CD4-positive, alpha-beta memory T cell (primary cell): ENCODE measurements at regions of chr15 and their contacts with region 1.

Region 1: GRCh38 chr15:70299931-70300869 is 202.5 kb upstream of the TLE3 start:
- DNase-seq: peak; percentile 60 to 88 (median 64)
- H3K4me3 ChIP-seq: no peak overlapping the region
- H3K4me3 Mint-ChIP-seq: peak overlapping the region in 7 of 8 donors; percentile 32 to 70 (median 64)
- H3K27ac ChIP-seq: no peak overlapping the region
- H3K27ac Mint-ChIP-seq: peak overlapping the region; percentile 61 to 90 (median 83)
- H3K4me1 ChIP-seq: peaks cover 32% of the 10 kb centered on the region
- H3K4me1 Mint-ChIP-seq: peaks cover 9 to 19% (median 16%) of the 10 kb centered on the region in 4 donors
- H3K27me3 ChIP-seq: no peaks in the 10 kb centered on the region
- H3K27me3 Mint-ChIP-seq: no peaks in the 10 kb centered on the region

Region 2: GRCh38 chr15:69997697-69998273 is 302.4 kb before region 1 on chr15:
- CTCF ChIA-PET with region 1: no interaction called
- POLR2A ChIA-PET with region 1: no interaction called
- intact Hi-C with region 1: no loop called
- DNase-seq: no peak
- H3K4me3 ChIP-seq: no peak overlapping the region
- H3K4me3 Mint-ChIP-seq: no peak overlapping the region
- H3K27ac ChIP-seq: no peak overlapping the region
- H3K27ac Mint-ChIP-seq: peak overlapping the region in 1 of 7 donors; percentile 77
- H3K4me1 ChIP-seq: no peaks in the 10 kb centered on the region
- H3K4me1 Mint-ChIP-seq: no peaks in the 10 kb centered on the region
- H3K27me3 ChIP-seq: no peaks in the 10 kb centered on the region
- H3K27me3 Mint-ChIP-seq: peaks cover 2 to 7% of the 10 kb centered on the region in 2 donors

Region 3: DNA sequence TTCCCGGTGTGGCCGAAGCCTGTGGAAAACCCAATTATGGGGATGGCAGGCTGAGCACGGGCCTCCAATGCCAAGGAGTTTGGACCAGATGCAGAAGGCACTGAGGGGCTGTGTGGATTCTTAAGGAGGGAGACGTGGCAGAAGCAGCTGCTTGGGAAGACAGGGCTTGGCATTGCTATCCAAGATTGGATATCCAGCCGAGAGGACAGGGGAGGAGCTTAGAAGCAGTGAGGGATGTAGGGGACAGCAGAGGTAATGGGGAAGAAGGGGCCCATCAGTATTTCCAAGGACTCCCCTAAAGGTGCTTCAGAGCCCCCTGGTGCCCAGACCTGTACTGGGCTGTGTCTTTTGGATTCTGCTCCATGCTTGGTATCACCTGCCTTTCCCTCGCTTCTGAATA is 89.7 kb before region 1 on chr15:
- CTCF ChIA-PET with region 1: no interaction called
- POLR2A ChIA-PET with region 1: no interaction called
- intact Hi-C with region 1: loop called (anchors 10 kb)
- DNase-seq: no peak
- H3K4me3 ChIP-seq: no peak overlapping the region
- H3K4me3 Mint-ChIP-seq: no peak overlapping the region
- H3K27ac ChIP-seq: no peak overlapping the region
- H3K27ac Mint-ChIP-seq: no peak overlapping the region
- H3K4me1 ChIP-seq: no peaks in the 10 kb centered on the region
- H3K4me1 Mint-ChIP-seq: no peaks in the 10 kb centered on the region
- H3K27me3 ChIP-seq: no peaks in the 10 kb centered on the region
- H3K27me3 Mint-ChIP-seq: no peaks in the 10 kb centered on the region

Region 4: GRCh38 chr15:70259028-70259424 is 41.2 kb before region 1 on chr15:
- CTCF ChIA-PET with region 1: no interaction called
- POLR2A ChIA-PET with region 1: interaction called, 11 read pairs
- intact Hi-C with region 1: no loop called
- DNase-seq: peak; percentile 47 to 64 (median 52)
- H3K4me3 ChIP-seq: peak overlapping the region; percentile 43 to 49
- H3K4me3 Mint-ChIP-seq: peak overlapping the region; percentile 68 to 92 (median 80)
- H3K27ac ChIP-seq: peak overlapping the region; percentile 29
- H3K27ac Mint-ChIP-seq: peak overlapping the region; percentile 77 to 93 (median 85)
- H3K4me1 ChIP-seq: peaks cover 38% of the 10 kb centered on the region
- H3K4me1 Mint-ChIP-seq: peaks cover 38 to 63% (median 45%) of the 10 kb centered on the region in 4 donors
- H3K27me3 ChIP-seq: no peaks in the 10 kb centered on the region
- H3K27me3 Mint-ChIP-seq: no peaks in the 10 kb centered on the region